HepG2 (cell line): ENCODE measurements at regions of chr3 and their contacts with region 1.

Region 1: DNA sequence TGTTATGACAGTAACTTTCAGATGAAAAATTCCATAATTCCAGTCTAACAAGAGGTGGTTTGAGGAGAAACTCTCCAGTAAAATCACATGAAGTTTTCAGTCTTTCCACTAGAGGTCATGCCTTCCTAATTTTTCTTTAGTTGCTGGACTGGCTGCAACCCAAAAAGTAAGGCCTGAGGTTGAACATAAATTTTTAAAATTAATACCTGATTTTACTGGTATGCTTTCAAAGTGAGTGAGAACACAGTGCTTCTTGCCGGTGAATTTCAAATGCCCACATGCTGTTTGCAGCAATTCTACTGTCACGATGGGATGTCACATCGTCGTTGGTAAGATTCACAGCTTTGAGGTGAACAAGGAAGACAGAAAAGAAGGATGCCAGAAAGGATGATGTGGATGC is 89.0 kb upstream of the FGF12 start:
- DNase-seq: peak; percentile 49
- ATAC-seq: no peak
- H3K4me3 ChIP-seq: no peak overlapping the region
- H3K27ac ChIP-seq: no peak overlapping the region
- H3K4me1 ChIP-seq: no peaks in the 10 kb centered on the region
- H3K27me3 ChIP-seq: no peaks in the 10 kb centered on the region
- CTCF ChIP-seq: peak; percentile 68
- EP300 ChIP-seq: no peak
- POLR2A ChIP-seq: no peak
- RAD21 ChIP-seq: no peak; the same call in 1 of the 2 replicates

Region 2: GRCh38 chr3:192887047-192887446 is 70.7 kb after region 1 on chr3:
- CTCF ChIA-PET with region 1: no interaction called
- POLR2A ChIA-PET with region 1: no interaction called
- in situ Hi-C with region 1: no loop called
- intact Hi-C with region 1: loop called (anchors 5 kb)
- DNase-seq: peak; percentile 38
- ATAC-seq: no peak
- H3K4me3 ChIP-seq: no peak overlapping the region
- H3K27ac ChIP-seq: no peak overlapping the region
- H3K4me1 ChIP-seq: peaks cover 63% of the 10 kb centered on the region
- H3K27me3 ChIP-seq: no peaks in the 10 kb centered on the region
- CTCF ChIP-seq: no peak
- EP300 ChIP-seq: no peak
- POLR2A ChIP-seq: no peak
- RAD21 ChIP-seq: no peak

Region 3: DNA sequence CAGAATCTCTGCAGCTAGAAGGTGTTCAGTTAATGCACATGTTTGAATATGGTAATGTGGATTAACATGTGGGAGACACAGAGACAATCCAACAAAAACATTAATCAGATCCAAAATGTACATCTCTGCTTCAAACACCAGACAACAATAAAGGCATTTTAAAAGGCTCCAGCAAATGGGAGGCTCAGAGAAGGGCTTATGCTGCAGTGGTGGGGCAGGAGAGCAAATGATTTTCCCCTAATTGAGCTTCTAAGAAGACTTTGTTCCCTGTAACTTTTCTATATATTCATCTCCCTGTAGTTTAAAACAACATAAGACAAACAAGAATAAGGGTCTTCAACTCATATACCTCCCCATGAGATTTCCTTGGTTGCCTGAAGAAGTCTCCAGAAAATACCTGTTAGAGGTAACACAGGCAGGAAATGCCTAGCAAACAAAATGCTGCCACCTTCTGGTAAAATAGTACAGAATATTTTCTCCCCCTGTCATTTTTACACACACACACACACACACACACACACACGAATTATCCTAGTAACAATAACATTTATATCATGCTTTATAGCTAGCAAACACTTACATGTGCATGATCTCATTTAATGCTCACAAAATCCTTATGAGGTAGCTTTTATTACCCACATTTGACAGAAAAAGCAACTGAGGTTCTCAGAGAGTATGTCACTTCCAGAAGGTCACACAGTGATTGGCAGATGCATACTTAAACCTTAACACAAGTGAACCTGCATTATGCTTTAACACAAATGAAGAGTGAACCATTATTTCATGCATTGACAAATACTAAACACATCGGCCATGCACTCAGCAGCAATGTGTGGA is 224.7 kb after region 1 on chr3:
- CTCF ChIA-PET with region 1: interaction called, 40 read pairs
- POLR2A ChIA-PET with region 1: no interaction called
- in situ Hi-C with region 1: loop called (anchors 5 kb)
- intact Hi-C with region 1: loop called (anchors 1 kb)
- DNase-seq: peak; percentile 24
- ATAC-seq: peak; percentile 60; the same call in 2 of the 3 replicates
- H3K4me3 ChIP-seq: no peak overlapping the region
- H3K27ac ChIP-seq: no peak overlapping the region
- H3K4me1 ChIP-seq: no peaks in the 10 kb centered on the region
- H3K27me3 ChIP-seq: no peaks in the 10 kb centered on the region
- CTCF ChIP-seq: peak; percentile 58
- EP300 ChIP-seq: no peak
- POLR2A ChIP-seq: no peak
- RAD21 ChIP-seq: no peak

Region 4: GRCh38 chr3:193134844-193135243 is 318.5 kb after region 1 on chr3:
- CTCF ChIA-PET with region 1: no interaction called
- POLR2A ChIA-PET with region 1: no interaction called
- in situ Hi-C with region 1: no loop called
- intact Hi-C with region 1: loop called (anchors 10 kb)
- DNase-seq: no peak
- ATAC-seq: no peak
- H3K4me3 ChIP-seq: no peak overlapping the region
- H3K27ac ChIP-seq: no peak overlapping the region
- H3K4me1 ChIP-seq: no peaks in the 10 kb centered on the region
- H3K27me3 ChIP-seq: no peaks in the 10 kb centered on the region; a peak in 1 of 5 replicates
- CTCF ChIP-seq: no peak
- EP300 ChIP-seq: no peak
- POLR2A ChIP-seq: no peak
- RAD21 ChIP-seq: no peak

Region 5: DNA sequence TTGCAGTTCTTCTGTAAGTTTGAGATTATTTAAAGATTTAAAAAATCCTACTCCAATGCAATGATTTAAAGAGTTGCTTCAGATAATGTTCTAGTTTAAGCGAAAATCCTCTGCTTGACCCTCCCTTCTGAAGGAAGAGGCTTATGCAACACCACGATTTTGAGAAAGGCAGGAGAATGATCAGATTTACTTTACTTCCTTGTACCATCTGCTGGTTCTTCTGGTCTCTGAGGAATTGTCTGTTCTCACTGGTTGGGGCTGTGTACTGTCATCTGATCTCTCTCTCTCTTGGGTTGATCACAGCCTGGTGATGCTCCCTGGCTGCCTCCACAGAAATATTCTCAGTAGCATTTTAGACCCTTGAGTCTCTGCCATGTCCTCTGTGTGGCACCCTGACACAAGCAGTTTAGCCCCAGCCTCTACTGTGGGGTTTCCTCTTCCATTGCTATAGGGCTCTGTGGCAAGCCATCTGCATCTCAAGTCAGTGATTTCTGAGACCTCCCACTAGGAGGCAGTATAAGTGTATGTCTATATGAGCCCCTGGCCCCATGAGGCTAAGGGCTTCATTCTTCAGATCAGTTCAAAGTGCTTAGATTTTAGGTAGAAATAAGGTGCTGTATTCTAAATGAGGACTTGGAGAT is 373.9 kb after region 1 on chr3:
- CTCF ChIA-PET with region 1: no interaction called
- POLR2A ChIA-PET with region 1: no interaction called
- in situ Hi-C with region 1: no loop called
- intact Hi-C with region 1: loop called (anchors 10 kb)
- DNase-seq: peak; percentile 23
- ATAC-seq: peak; percentile 77
- H3K4me3 ChIP-seq: no peak overlapping the region
- H3K27ac ChIP-seq: no peak overlapping the region
- H3K4me1 ChIP-seq: no peaks in the 10 kb centered on the region
- H3K27me3 ChIP-seq: 0 out of 5 replicates have a peak, but pooled peaks cover 0 to 4% of the 10 kb centered on the region in 2 experiments
- CTCF ChIP-seq: peak; percentile 43
- EP300 ChIP-seq: no peak
- POLR2A ChIP-seq: no peak
- RAD21 ChIP-seq: no peak

Region 6: GRCh38 chr3:193465992-193466608 is 649.7 kb after region 1 on chr3:
- CTCF ChIA-PET with region 1: no interaction called
- POLR2A ChIA-PET with region 1: no interaction called
- in situ Hi-C with region 1: loop called (anchors 25 kb)
- intact Hi-C with region 1: loop called (anchors 2 kb)
- DNase-seq: no peak
- ATAC-seq: no peak
- H3K4me3 ChIP-seq: no peak overlapping the region
- H3K27ac ChIP-seq: no peak overlapping the region
- H3K4me1 ChIP-seq: no peaks in the 10 kb centered on the region
- H3K27me3 ChIP-seq: no peaks in the 10 kb centered on the region
- CTCF ChIP-seq: no peak
- EP300 ChIP-seq: no peak
- POLR2A ChIP-seq: no peak
- RAD21 ChIP-seq: no peak

Region 7: GRCh38 chr3:193572426-193572908 is 756.1 kb after region 1 on chr3:
- CTCF ChIA-PET with region 1: interaction called, 8 read pairs
- POLR2A ChIA-PET with region 1: interaction called, 3 read pairs
- in situ Hi-C with region 1: loop called (anchors 5 kb)
- intact Hi-C with region 1: loop called (anchors 1 kb)
- DNase-seq: peak; percentile 44
- ATAC-seq: peak; percentile 91
- H3K4me3 ChIP-seq: no peak overlapping the region
- H3K27ac ChIP-seq: no peak overlapping the region
- H3K4me1 ChIP-seq: no peaks in the 10 kb centered on the region
- H3K27me3 ChIP-seq: 0 out of 5 replicates have a peak, but pooled peaks cover 0 to 2% of the 10 kb centered on the region in 2 experiments
- CTCF ChIP-seq: peak; percentile 86
- EP300 ChIP-seq: no peak
- POLR2A ChIP-seq: no peak
- RAD21 ChIP-seq: peak; percentile 68; the same call in 1 of the 2 replicates